Activated CD4-positive, alpha-beta T cell treated with anti-CD3 and anti-CD28 coated beads for 36 hours (primary cell): ENCODE measurements at regions of chr1 and their contacts with region 1.

Region 1: GRCh38 chr1:223683586-223684487 is 18.3 kb upstream of the CAPN8 start:
- DNase-seq: peak; percentile 73
- ATAC-seq: peak; percentile 57
- H3K4me3 Mint-ChIP-seq: no peak overlapping the region
- H3K27ac Mint-ChIP-seq: no peak overlapping the region
- H3K4me1 Mint-ChIP-seq: no peaks in the 10 kb centered on the region
- H3K27me3 Mint-ChIP-seq: peaks cover under 1% of the 10 kb centered on the region

Region 2: DNA sequence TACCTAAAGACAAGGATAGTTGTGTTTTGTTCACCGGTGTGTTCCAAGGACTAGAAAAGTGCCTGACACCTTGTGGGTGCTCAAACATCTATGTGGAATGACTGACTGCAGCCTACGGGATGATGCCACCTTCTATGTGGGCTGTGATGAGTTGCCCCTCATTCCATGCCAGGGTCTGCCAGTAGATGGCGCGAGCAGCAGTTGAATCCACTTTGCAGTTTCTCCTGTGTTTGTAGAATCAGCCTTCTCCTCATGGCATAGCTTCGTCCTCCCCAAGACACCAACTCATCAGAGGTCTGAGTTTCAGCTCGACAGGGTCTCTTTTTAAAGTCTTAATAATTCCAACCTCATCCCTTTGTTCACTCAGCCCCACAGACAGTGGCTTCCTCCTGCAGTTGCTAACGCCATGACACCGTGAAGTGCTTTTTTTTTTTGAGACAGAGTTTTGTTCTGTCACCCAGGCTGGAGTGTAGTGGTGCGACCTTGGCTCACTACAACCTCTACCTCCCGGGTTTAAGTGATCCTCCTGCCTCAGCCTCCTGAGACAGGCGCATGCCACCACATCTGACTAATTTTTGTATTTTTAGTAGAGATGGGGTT is 152.0 kb before region 1 on chr1:
- CTCF ChIA-PET with region 1: interaction called, 4 read pairs
- POLR2A ChIA-PET with region 1: no interaction called
- intact Hi-C with region 1: loop called (anchors 2 to 5 kb)
- DNase-seq: peak; percentile 81
- ATAC-seq: peak; percentile 85
- H3K4me3 Mint-ChIP-seq: no peak overlapping the region
- H3K27ac Mint-ChIP-seq: no peak overlapping the region
- H3K4me1 Mint-ChIP-seq: peaks cover 6% of the 10 kb centered on the region
- H3K27me3 Mint-ChIP-seq: no peaks in the 10 kb centered on the region